T-cell (primary cell): ENCODE measurements at regions of chr2 and their contacts with region 1.

Region 1: DNA sequence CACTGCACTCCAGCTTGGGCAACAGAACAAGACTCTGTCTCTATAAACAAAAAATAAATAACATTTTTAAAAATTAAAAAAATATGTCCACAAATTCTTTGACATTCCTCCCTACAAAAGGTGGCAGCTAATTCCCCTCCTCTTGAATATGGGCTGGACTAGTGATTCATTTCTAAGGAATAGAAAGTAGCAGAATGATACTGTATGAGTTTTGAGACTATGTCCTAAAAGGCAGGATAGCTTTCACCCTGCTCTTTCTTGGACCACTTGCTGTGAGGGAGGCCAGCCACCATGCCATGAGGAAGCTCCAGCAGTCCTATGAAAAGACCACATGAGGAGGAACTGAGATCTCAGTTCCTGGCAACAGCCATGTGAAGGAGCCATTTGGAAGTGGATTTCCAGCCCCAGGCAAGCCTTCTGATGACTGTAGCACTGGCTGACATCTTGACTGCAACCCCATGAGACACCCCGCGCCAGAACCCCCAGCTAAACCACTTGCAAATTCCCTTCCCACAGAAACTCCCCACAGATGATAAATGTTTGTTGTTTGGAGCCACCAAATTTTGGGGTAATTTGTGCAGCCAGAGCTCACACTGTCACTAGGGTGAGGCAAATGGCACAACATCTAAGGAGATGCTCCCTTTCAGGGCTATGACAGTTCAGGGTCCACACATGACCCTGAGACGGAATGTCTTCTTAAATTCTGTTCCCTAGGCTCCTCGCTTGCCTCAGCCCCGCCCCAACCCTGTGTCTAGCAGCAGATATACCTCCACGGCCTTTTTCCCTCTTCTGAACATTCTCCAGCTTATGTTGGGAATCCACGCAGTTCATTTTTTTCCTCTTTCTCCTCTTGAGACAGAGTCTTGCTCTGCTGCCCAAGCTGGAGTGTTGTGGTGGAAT is 17.1 kb upstream of the ATOH8 start:
- DNase-seq: no peak
- ATAC-seq: no peak
- H3K4me3 ChIP-seq: no peak overlapping the region
- H3K4me3 Mint-ChIP-seq: no peak overlapping the region
- H3K27ac ChIP-seq: no peak overlapping the region
- H3K27ac Mint-ChIP-seq: no peak overlapping the region
- H3K4me1 ChIP-seq: no peaks in the 10 kb centered on the region
- H3K4me1 Mint-ChIP-seq: no peaks in the 10 kb centered on the region
- H3K27me3 ChIP-seq: peaks cover 0 to 24% of the 10 kb centered on the region in 2 experiments
- H3K27me3 Mint-ChIP-seq: peaks cover 14 to 24% of the 10 kb centered on the region in 2 donors

Region 2: GRCh38 chr2:85712849-85713602 is 23.7 kb before region 1 on chr2:
- CTCF ChIA-PET with region 1: no interaction called
- POLR2A ChIA-PET with region 1: no interaction called
- DNase-seq: no peak
- ATAC-seq: no peak
- H3K4me3 ChIP-seq: no peak overlapping the region
- H3K4me3 Mint-ChIP-seq: no peak overlapping the region
- H3K27ac ChIP-seq: no peak overlapping the region
- H3K27ac Mint-ChIP-seq: no peak overlapping the region
- H3K4me1 ChIP-seq: peaks cover 0 to 4% of the 10 kb centered on the region in 2 experiments
- H3K4me1 Mint-ChIP-seq: peaks cover 6 to 15% (median 8%) of the 10 kb centered on the region in 3 donors
- H3K27me3 ChIP-seq: peaks cover 0 to 25% of the 10 kb centered on the region in 2 experiments
- H3K27me3 Mint-ChIP-seq: peaks cover 0 to 4% of the 10 kb centered on the region in 2 donors

Region 3: GRCh38 chr2:86123328-86123925 is 386.7 kb after region 1 on chr2:
- CTCF ChIA-PET with region 1: interaction called in 1 of 2 experiments, 5 read pairs
- POLR2A ChIA-PET with region 1: interaction called in 1 of 2 experiments, 10 read pairs
- DNase-seq: no peak
- ATAC-seq: no peak
- H3K4me3 ChIP-seq: no peak overlapping the region
- H3K4me3 Mint-ChIP-seq: no peak overlapping the region
- H3K27ac ChIP-seq: no peak overlapping the region
- H3K27ac Mint-ChIP-seq: no peak overlapping the region
- H3K4me1 ChIP-seq: no peaks in the 10 kb centered on the region
- H3K4me1 Mint-ChIP-seq: no peaks in the 10 kb centered on the region
- H3K27me3 ChIP-seq: no peaks in the 10 kb centered on the region
- H3K27me3 Mint-ChIP-seq: no peaks in the 10 kb centered on the region